ENCODE measurements at regions of chr4 and their contacts with region 1.

Region 1: GRCh38 chr4:147096667-147097604 is 151.3 kb upstream of the TTC29 start:
- DNase-seq: peak; percentile 35
- H3K4me3 ChIP-seq: no peak overlapping the region
- H3K27ac ChIP-seq: no peak overlapping the region
- H3K4me1 ChIP-seq: no peaks in the 10 kb centered on the region; a peak in 1 of 4 replicates
- H3K27me3 ChIP-seq: no peaks in the 10 kb centered on the region
- CTCF ChIP-seq: peak; percentile 82
- EP300 ChIP-seq: no peak
- RAD21 ChIP-seq: peak; percentile 89

Region 2: GRCh38 chr4:146342600-146343192 is 754.2 kb before region 1 on chr4:
- CTCF ChIA-PET with region 1: interaction called, 32 read pairs
- POLR2A ChIA-PET with region 1: no interaction called
- DNase-seq: peak; percentile 32
- H3K4me3 ChIP-seq: no peak overlapping the region
- H3K27ac ChIP-seq: no peak overlapping the region
- H3K4me1 ChIP-seq: peaks cover 0 to 43% of the 10 kb centered on the region in 2 experiments; a peak in 2 of 4 replicates
- H3K27me3 ChIP-seq: no peaks in the 10 kb centered on the region
- CTCF ChIP-seq: peak; percentile 68
- EP300 ChIP-seq: no peak
- RAD21 ChIP-seq: peak; percentile 83

Region 3: GRCh38 chr4:146998157-146998556 is 98.8 kb before region 1 on chr4:
- CTCF ChIA-PET with region 1: no interaction called
- POLR2A ChIA-PET with region 1: no interaction called
- DNase-seq: no peak
- H3K4me3 ChIP-seq: no peak overlapping the region
- H3K27ac ChIP-seq: no peak overlapping the region
- H3K4me1 ChIP-seq: no peaks in the 10 kb centered on the region
- H3K27me3 ChIP-seq: no peaks in the 10 kb centered on the region
- CTCF ChIP-seq: no peak
- EP300 ChIP-seq: no peak
- RAD21 ChIP-seq: no peak

Region 4: GRCh38 chr4:147019061-147019460 is 77.9 kb before region 1 on chr4:
- CTCF ChIA-PET with region 1: interaction called, 100 read pairs
- POLR2A ChIA-PET with region 1: interaction called, 3 read pairs
- DNase-seq: peak; percentile 34
- H3K4me3 ChIP-seq: no peak overlapping the region
- H3K27ac ChIP-seq: no peak overlapping the region
- H3K4me1 ChIP-seq: no peaks in the 10 kb centered on the region; a peak in 1 of 4 replicates
- H3K27me3 ChIP-seq: no peaks in the 10 kb centered on the region
- CTCF ChIP-seq: peak; percentile 73
- EP300 ChIP-seq: no peak
- RAD21 ChIP-seq: peak; percentile 91

Region 5: DNA sequence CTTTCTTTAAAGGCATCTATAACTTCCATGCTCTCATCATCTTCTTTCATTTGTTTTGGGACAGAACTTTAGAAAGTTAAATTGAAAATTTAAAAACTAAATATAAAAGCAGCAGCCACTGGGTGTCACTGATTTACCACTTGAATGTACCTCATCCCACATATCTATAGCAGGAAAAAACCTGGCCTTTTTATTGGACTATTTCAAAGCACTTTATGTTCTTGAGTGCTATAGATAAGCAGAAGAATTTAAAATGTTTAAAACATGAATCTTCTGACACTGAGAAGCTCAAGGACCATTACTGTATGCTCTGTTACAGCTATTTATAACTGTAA is 14.1 kb after region 1 on chr4:
- CTCF ChIA-PET with region 1: interaction called, 39 read pairs
- POLR2A ChIA-PET with region 1: no interaction called
- DNase-seq: peak; percentile 29
- H3K4me3 ChIP-seq: no peak overlapping the region
- H3K27ac ChIP-seq: no peak overlapping the region
- H3K4me1 ChIP-seq: no peaks in the 10 kb centered on the region
- H3K27me3 ChIP-seq: no peaks in the 10 kb centered on the region
- CTCF ChIP-seq: peak; percentile 43
- EP300 ChIP-seq: no peak
- RAD21 ChIP-seq: peak; percentile 71

Region 6: GRCh38 chr4:147160908-147161513 is 64.1 kb after region 1 on chr4:
- CTCF ChIA-PET with region 1: interaction called, 11 read pairs
- POLR2A ChIA-PET with region 1: no interaction called
- DNase-seq: peak; percentile 77
- H3K4me3 ChIP-seq: peak overlapping the region in 1 of 2 experiments; percentile 30; a peak in 1 of 4 replicates
- H3K27ac ChIP-seq: no peak overlapping the region
- H3K4me1 ChIP-seq: peaks cover 3 to 18% of the 10 kb centered on the region in 2 experiments; a peak in 3 of 4 replicates
- H3K27me3 ChIP-seq: no peaks in the 10 kb centered on the region
- CTCF ChIP-seq: peak; percentile 85
- EP300 ChIP-seq: no peak
- RAD21 ChIP-seq: peak; percentile 92

Measured in SK-N-SH (cell line).